Transverse colon (tissue), 4 donors: ENCODE measurements at regions of chr4 and their contacts with region 1.

Region 1: GRCh38 chr4:123102897-123103471 is 180.6 kb upstream of the NUDT6 start:
- DNase-seq: no peak
- H3K4me3 ChIP-seq: no peak overlapping the region
- H3K27ac ChIP-seq: no peak overlapping the region
- H3K4me1 ChIP-seq: peaks cover 0 to 7% (median 2%) of the 10 kb centered on the region in 4 donors
- H3K27me3 ChIP-seq: no peaks in the 10 kb centered on the region
- CTCF ChIP-seq: peak; percentile 67 to 74 (median 74)
- EP300 ChIP-seq: no peak
- POLR2A ChIP-seq: no peak

Region 2: GRCh38 chr4:124111922-124112321 is 1008.9 kb after region 1 on chr4:
- in situ Hi-C with region 1: loop called in 1 of 4 experiments (anchors 25 kb)
- intact Hi-C with region 1: no loop called
- DNase-seq: no peak
- H3K4me3 ChIP-seq: no peak overlapping the region
- H3K27ac ChIP-seq: no peak overlapping the region
- H3K4me1 ChIP-seq: no peaks in the 10 kb centered on the region
- H3K27me3 ChIP-seq: no peaks in the 10 kb centered on the region
- CTCF ChIP-seq: peak; percentile 38 to 59 (median 46)
- EP300 ChIP-seq: no peak
- POLR2A ChIP-seq: no peak

Region 3: GRCh38 chr4:124177647-124178425 is 1074.9 kb after region 1 on chr4:
- in situ Hi-C with region 1: no loop called
- intact Hi-C with region 1: no loop called
- DNase-seq: no peak
- H3K4me3 ChIP-seq: no peak overlapping the region
- H3K27ac ChIP-seq: no peak overlapping the region
- H3K4me1 ChIP-seq: no peaks in the 10 kb centered on the region
- H3K27me3 ChIP-seq: no peaks in the 10 kb centered on the region
- CTCF ChIP-seq: no peak
- EP300 ChIP-seq: no peak
- POLR2A ChIP-seq: no peak